CD8-positive, alpha-beta T cell (primary cell): ENCODE measurements at regions of chr10 and their contacts with region 1.

Region 1: GRCh38 chr10:93288654-93289634 is 193.2 kb downstream of the MYOF start:
- DNase-seq: peak in 7 of 9 experiments; percentile 25 to 61 (median 46)
- ATAC-seq: no peak
- H3K4me3 ChIP-seq: no peak overlapping the region
- H3K4me3 Mint-ChIP-seq: no peak overlapping the region
- H3K27ac ChIP-seq: no peak overlapping the region
- H3K27ac Mint-ChIP-seq: no peak overlapping the region
- H3K4me1 ChIP-seq: no peaks in the 10 kb centered on the region
- H3K4me1 Mint-ChIP-seq: no peaks in the 10 kb centered on the region
- H3K27me3 ChIP-seq: no peaks in the 10 kb centered on the region
- H3K27me3 Mint-ChIP-seq: peaks cover 2% of the 10 kb centered on the region
- CTCF ChIP-seq: peak; percentile 68

Region 2: DNA sequence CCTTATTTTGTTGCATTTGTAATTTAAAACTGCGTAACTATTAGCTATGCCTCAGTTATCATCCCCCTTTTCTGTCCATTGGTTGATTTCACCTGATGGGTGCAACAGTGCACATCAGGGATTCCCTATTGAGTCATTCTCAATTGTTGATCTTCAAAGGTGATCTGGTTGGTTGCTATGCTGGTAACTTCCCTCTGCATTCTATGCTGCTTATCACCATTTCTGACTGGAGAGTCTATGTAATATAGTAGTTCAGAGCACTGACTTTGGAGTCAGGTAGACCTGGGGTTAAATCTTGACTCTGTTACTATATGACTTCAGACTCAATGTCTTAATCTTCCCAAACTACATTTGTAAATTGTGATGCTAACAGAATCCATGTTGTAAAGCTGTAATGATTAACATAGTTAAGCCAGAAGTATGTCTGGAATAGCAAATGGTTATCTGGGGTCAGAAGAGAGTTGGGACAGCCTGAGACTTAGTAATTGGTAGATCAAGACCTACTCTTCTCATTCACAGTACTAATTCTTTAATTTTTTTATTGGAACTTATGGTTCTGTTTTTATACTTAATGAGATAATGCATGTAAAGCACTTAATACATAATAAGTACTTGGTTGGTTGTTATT is 402.5 kb before region 1 on chr10:
- CTCF ChIA-PET with region 1: interaction called, 4 read pairs
- POLR2A ChIA-PET with region 1: no interaction called
- intact Hi-C with region 1: loop called (anchors 1 to 2 kb)
- DNase-seq: no peak
- ATAC-seq: no peak
- H3K4me3 ChIP-seq: no peak overlapping the region
- H3K4me3 Mint-ChIP-seq: no peak overlapping the region
- H3K27ac ChIP-seq: no peak overlapping the region
- H3K27ac Mint-ChIP-seq: no peak overlapping the region
- H3K4me1 ChIP-seq: no peaks in the 10 kb centered on the region
- H3K4me1 Mint-ChIP-seq: peaks cover 5% of the 10 kb centered on the region
- H3K27me3 ChIP-seq: no peaks in the 10 kb centered on the region
- H3K27me3 Mint-ChIP-seq: no peaks in the 10 kb centered on the region
- CTCF ChIP-seq: no peak

Region 3: DNA sequence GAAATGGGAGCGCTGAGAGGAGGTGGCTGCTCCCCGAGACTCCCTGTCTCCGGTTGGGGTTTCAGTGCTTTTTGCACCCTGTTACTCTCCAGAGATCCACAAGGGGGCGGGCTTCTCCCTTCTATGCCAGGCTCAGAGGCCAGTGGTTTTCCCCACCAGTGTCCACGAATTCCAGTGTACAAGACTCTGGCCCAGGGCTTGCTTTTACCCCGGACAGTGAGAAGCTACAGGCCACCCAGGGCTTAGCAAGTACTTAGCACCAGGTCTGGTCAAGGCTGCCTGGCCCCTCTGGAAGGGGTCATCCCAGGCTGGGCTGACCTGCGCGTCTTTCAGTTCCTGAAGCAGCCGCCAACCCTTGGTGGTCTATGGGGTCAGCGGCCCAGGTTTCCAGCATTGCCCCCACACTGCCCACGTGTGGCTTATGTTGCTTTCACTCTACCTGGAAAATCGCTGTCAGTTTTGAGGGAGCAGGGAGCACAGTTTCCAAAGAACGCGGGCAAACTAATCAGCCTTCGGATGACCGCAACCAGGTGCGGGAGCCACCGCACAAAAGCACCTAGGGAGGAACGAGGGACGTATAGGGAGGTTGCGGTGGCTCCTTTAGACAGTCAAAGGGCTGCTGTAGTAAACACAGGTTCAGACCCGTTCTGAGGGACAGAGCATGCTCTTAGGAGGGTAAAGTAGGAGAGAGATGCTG is 208.4 kb before region 1 on chr10:
- CTCF ChIA-PET with region 1: interaction called, 3 read pairs
- POLR2A ChIA-PET with region 1: no interaction called
- intact Hi-C with region 1: loop called (anchors 1 kb)
- DNase-seq: peak in 8 of 9 experiments; percentile 23 to 63 (median 50)
- ATAC-seq: no peak
- H3K4me3 ChIP-seq: no peak overlapping the region
- H3K4me3 Mint-ChIP-seq: no peak overlapping the region
- H3K27ac ChIP-seq: no peak overlapping the region
- H3K27ac Mint-ChIP-seq: no peak overlapping the region
- H3K4me1 ChIP-seq: no peaks in the 10 kb centered on the region
- H3K4me1 Mint-ChIP-seq: peaks cover 5% of the 10 kb centered on the region
- H3K27me3 ChIP-seq: peaks cover 0 to 4% of the 10 kb centered on the region in 2 experiments
- H3K27me3 Mint-ChIP-seq: peaks cover 42% of the 10 kb centered on the region
- CTCF ChIP-seq: peak; percentile 59

Region 4: DNA sequence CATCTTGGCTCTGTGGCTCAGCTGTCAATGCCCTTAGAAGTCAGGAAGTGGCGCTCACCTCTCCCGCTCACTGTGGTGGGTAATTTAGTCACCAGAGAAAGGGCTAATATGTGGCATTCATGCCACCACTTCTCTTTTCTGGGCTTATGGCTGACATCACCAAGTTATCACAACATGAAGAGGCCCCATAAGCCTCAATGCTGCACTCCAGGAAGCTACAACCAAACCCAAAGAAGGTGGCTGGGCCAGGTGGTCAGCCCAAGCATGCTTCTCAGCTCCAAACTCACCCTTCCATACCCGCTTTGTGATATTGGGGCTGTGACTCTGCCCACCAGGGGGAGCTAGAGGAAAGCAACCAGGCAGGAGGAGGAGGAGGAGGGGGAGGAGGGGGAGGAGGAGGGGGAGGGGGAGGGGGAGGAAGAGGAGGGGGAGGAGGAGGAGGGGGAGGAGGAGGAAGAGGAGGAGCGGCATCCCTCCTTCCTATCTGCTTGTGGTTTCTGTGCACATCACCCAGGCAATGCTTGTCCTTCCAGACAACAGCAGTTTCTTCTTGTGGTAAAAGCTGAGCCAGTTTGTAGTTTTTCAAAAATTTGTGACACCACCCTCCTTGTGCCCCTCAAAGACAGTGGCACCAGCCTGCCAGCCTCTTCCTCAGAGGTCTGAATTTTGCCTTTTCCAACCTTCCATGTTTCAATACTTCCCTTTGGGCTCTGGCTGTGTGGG is 173.1 kb before region 1 on chr10:
- CTCF ChIA-PET with region 1: interaction called, 7 read pairs
- POLR2A ChIA-PET with region 1: no interaction called
- intact Hi-C with region 1: loop called (anchors 1 to 2 kb)
- DNase-seq: peak; percentile 40 to 80 (median 67)
- ATAC-seq: peak; percentile 64
- H3K4me3 ChIP-seq: no peak overlapping the region
- H3K4me3 Mint-ChIP-seq: no peak overlapping the region
- H3K27ac ChIP-seq: no peak overlapping the region
- H3K27ac Mint-ChIP-seq: peak overlapping the region; percentile 11
- H3K4me1 ChIP-seq: peaks cover 14% of the 10 kb centered on the region
- H3K4me1 Mint-ChIP-seq: peaks cover 12% of the 10 kb centered on the region
- H3K27me3 ChIP-seq: no peaks in the 10 kb centered on the region
- H3K27me3 Mint-ChIP-seq: peaks cover 24% of the 10 kb centered on the region
- CTCF ChIP-seq: no peak

Region 5: GRCh38 chr10:94092848-94093247 is 803.9 kb after region 1 on chr10:
- CTCF ChIA-PET with region 1: no interaction called
- POLR2A ChIA-PET with region 1: no interaction called
- intact Hi-C with region 1: no loop called
- DNase-seq: no peak
- ATAC-seq: no peak
- H3K4me3 ChIP-seq: no peak overlapping the region
- H3K4me3 Mint-ChIP-seq: no peak overlapping the region
- H3K27ac ChIP-seq: no peak overlapping the region
- H3K27ac Mint-ChIP-seq: no peak overlapping the region
- H3K4me1 ChIP-seq: no peaks in the 10 kb centered on the region
- H3K4me1 Mint-ChIP-seq: no peaks in the 10 kb centered on the region
- H3K27me3 ChIP-seq: no peaks in the 10 kb centered on the region
- H3K27me3 Mint-ChIP-seq: no peaks in the 10 kb centered on the region
- CTCF ChIP-seq: no peak